ENCODE measurements at regions of chr2 and their contacts with region 1.

Region 1: GRCh38 chr2:47141520-47141919 is 13.6 kb downstream of the STPG4 start:
- DNase-seq: no peak
- H3K4me3 ChIP-seq: no peak overlapping the region
- H3K27ac ChIP-seq: no peak overlapping the region
- H3K4me1 ChIP-seq: no peaks in the 10 kb centered on the region
- H3K27me3 ChIP-seq: no peaks in the 10 kb centered on the region
- CTCF ChIP-seq: no peak
- EP300 ChIP-seq: no peak
- POLR2A ChIP-seq: no peak

Region 2: GRCh38 chr2:45778720-45779171 is 1362.8 kb before region 1 on chr2:
- intact Hi-C with region 1: no loop called
- DNase-seq: peak; percentile 50 to 73 (median 54)
- H3K4me3 ChIP-seq: no peak overlapping the region
- H3K27ac ChIP-seq: no peak overlapping the region
- H3K4me1 ChIP-seq: no peaks in the 10 kb centered on the region
- H3K27me3 ChIP-seq: no peaks in the 10 kb centered on the region
- CTCF ChIP-seq: peak; percentile 49 to 55 (median 51)
- EP300 ChIP-seq: no peak
- POLR2A ChIP-seq: no peak

Region 3: DNA sequence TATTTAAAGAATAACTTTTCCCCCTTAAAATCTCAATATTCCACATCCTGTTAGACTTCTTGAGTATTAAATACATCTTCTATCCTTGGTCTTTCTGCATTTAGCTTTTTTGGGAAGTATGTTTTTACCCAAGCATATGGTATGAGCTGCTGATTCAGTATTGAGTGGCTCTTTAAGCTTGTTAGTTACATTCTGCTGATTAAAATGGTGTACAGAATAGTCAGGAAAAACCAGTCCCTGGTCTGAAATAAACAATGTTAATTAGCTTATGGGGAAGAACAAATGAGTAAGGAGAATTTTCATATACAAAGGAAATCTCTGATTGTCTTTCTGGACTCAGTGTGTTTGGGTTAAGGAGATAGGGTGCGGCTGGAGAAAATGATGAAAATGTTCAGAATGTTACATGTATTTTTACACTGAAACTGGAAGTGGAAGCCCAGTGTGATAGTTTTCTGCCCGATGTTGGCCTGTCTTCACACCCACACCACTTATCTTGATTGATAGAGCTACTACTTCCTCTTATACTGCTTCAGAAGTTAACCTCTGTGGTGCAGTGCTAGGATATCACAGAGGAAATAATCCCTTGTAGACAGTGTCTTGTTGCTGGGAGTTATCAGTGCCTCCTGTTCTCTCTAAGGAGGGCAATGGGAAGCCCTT is 345.4 kb after region 1 on chr2:
- intact Hi-C with region 1: loop called in 1 of 4 experiments (anchors 5 kb)
- DNase-seq: no peak
- H3K4me3 ChIP-seq: no peak overlapping the region
- H3K27ac ChIP-seq: no peak overlapping the region
- H3K4me1 ChIP-seq: no peaks in the 10 kb centered on the region
- H3K27me3 ChIP-seq: no peaks in the 10 kb centered on the region
- CTCF ChIP-seq: no peak
- EP300 ChIP-seq: no peak
- POLR2A ChIP-seq: no peak